Heart left ventricle (tissue), 16 donors: ENCODE measurements at regions of chr1 and their contacts with region 1.

Region 1: DNA sequence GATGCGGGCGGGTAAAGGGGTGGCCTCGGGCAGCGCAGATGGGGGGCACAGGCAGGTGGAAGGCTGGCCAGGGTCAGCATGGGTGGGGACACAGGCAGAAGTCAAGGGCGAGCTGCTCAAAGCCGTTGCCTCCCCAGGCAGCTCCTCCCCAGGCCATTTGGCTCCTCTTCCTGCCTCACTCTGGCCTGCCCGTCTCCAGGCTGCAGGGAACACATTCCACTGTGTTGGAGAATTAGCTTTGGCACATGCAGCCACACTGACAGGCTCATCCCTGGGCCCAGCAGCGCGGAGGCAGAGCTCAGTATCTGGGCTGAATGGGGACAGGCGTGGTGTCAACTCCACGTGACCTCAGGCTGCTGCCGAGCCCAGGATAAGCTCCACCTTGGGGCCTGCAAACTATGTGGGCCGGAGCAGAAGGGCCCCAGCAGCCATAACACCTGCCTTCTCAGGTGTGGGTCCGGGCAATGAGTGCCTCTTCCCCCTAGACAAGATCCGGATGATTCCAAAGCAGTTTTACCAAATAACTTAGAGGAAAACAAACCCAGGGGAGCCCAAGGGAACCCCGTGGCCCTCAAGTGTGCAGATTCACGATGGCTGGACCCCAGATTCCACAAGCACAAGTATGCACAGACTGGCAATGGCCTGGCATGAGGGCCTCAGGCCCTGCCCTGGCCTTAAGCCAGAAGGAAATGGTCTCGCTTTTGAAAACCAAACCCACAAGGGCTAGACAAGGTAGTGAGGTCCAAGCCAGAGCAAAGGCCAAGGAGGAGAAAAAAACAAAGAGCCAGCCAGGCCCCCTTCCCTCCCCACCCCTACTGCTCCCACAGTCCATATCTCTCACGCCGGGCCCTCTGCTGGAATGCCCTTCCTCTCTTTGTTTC is 40.2 kb downstream of the HSPG2 start:
- DNase-seq: peak; percentile 84 to 94 (median 89)
- ATAC-seq: peak; percentile 81 to 85 (median 82)
- H3K4me3 ChIP-seq: no peak overlapping the region
- H3K27ac ChIP-seq: peak overlapping the region; percentile 83 to 98 (median 90)
- H3K4me1 ChIP-seq: peaks cover 20 to 94% (median 85%) of the 10 kb centered on the region in 12 donors
- H3K27me3 ChIP-seq: no peaks in the 10 kb centered on the region
- CTCF ChIP-seq: no peak
- POLR2A ChIP-seq: peak in 1 of 2 donors; percentile 12

Region 2: GRCh38 chr1:21834094-21834493 is 62.8 kb before region 1 on chr1:
- intact Hi-C with region 1: no loop called
- DNase-seq: no peak
- ATAC-seq: no peak
- H3K4me3 ChIP-seq: no peak overlapping the region
- H3K27ac ChIP-seq: no peak overlapping the region
- H3K4me1 ChIP-seq: no peaks in the 10 kb centered on the region
- H3K27me3 ChIP-seq: no peaks in the 10 kb centered on the region
- CTCF ChIP-seq: no peak
- POLR2A ChIP-seq: no peak

Region 3: GRCh38 chr1:21937372-21938221 is 40.7 kb after region 1 on chr1:
- intact Hi-C with region 1: loop called in 9 of 10 experiments (anchors 2 to 5 kb)
- DNase-seq: peak; percentile 87 to 94 (median 90)
- ATAC-seq: peak; percentile 23 to 81 (median 66)
- H3K4me3 ChIP-seq: peak overlapping the region; percentile 14 to 98 (median 50)
- H3K27ac ChIP-seq: peak overlapping the region; percentile 57 to 91 (median 88)
- H3K4me1 ChIP-seq: peaks cover 20 to 86% (median 62%) of the 10 kb centered on the region in 12 donors
- H3K27me3 ChIP-seq: no peaks in the 10 kb centered on the region
- CTCF ChIP-seq: no peak
- POLR2A ChIP-seq: peak in 1 of 2 donors; percentile 69

Region 4: DNA sequence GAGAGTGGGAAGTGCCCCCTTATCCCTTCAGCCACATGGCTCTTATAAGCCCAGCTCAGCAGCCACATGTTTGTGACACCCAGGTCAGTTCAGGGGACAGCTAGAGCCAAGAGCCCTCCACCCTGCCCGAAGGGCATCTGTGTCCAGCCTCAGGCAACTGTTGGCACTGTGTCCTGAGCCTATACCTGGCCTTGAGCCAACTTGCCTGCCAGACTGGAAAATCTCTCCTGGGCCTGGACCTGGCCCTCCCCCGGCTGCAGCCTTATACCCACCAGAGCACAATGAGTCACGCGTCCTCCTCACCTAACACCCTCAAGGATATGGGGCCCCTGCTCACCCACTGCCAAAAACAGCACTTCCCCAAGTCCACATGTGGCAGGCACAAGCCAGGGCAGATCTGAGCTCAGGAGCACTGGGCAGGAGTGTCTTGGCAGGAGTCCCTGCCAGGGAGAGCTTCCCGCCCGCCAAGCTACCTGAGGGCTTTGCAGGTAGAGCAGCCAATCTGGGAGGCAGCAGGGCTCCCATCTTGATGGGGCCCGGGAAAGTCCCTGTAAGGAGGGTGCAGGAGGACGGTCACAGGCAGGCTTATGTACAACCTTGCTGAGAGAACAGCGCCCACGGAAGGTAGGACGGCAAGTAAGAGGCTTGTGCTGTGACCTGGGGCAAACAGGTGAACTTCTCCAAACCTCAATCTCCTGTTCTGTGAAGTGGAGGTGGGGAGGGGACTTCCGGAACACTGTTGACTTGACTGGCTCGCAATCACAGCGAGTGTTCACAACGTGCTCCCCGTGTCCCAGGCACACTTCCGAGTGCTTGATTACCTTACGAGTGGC is 60.0 kb after region 1 on chr1:
- intact Hi-C with region 1: loop called in 8 of 10 experiments (anchors 2 to 5 kb)
- DNase-seq: peak; percentile 65 to 92 (median 73)
- ATAC-seq: peak; percentile 78 to 93 (median 89)
- H3K4me3 ChIP-seq: no peak overlapping the region
- H3K27ac ChIP-seq: peak overlapping the region; percentile 62 to 84 (median 78)
- H3K4me1 ChIP-seq: peaks cover 6 to 50% (median 31%) of the 10 kb centered on the region in 12 donors
- H3K27me3 ChIP-seq: no peaks in the 10 kb centered on the region
- CTCF ChIP-seq: no peak
- POLR2A ChIP-seq: no peak

Region 5: GRCh38 chr1:21963477-21964217 is 66.8 kb after region 1 on chr1:
- intact Hi-C with region 1: loop called in 8 of 10 experiments (anchors 2 to 5 kb)
- DNase-seq: peak; percentile 65 to 88 (median 70)
- ATAC-seq: peak; percentile 84 to 90 (median 88)
- H3K4me3 ChIP-seq: no peak overlapping the region
- H3K27ac ChIP-seq: no peak overlapping the region
- H3K4me1 ChIP-seq: peaks cover 0 to 23% (median 9%) of the 10 kb centered on the region in 12 donors
- H3K27me3 ChIP-seq: no peaks in the 10 kb centered on the region
- CTCF ChIP-seq: peak; percentile 85 to 95 (median 92)
- POLR2A ChIP-seq: no peak